Mammary epithelial cell (primary cell): ENCODE measurements at regions of chr10 and their contacts with region 1.

Region 1: GRCh38 chr10:108346066-108346465 is 1181.6 kb upstream of the SORCS1 start:
- DNase-seq: no peak
- H3K4me3 ChIP-seq: no peak overlapping the region
- H3K27ac ChIP-seq: no peak overlapping the region
- H3K4me1 ChIP-seq: no peaks in the 10 kb centered on the region
- H3K27me3 ChIP-seq: no peaks in the 10 kb centered on the region
- CTCF ChIP-seq: no peak

Region 2: GRCh38 chr10:108404155-108404554 is 58.1 kb after region 1 on chr10:
- CTCF ChIA-PET with region 1: no interaction called
- dilution Hi-C with region 1: loop called (anchors 5 kb)
- in situ Hi-C with region 1: no loop called
- intact Hi-C with region 1: no loop called
- DNase-seq: no peak
- H3K4me3 ChIP-seq: no peak overlapping the region
- H3K27ac ChIP-seq: no peak overlapping the region
- H3K4me1 ChIP-seq: no peaks in the 10 kb centered on the region
- H3K27me3 ChIP-seq: no peaks in the 10 kb centered on the region
- CTCF ChIP-seq: no peak